ENCODE measurements at regions of chr4 and their contacts with region 1.

Region 1: DNA sequence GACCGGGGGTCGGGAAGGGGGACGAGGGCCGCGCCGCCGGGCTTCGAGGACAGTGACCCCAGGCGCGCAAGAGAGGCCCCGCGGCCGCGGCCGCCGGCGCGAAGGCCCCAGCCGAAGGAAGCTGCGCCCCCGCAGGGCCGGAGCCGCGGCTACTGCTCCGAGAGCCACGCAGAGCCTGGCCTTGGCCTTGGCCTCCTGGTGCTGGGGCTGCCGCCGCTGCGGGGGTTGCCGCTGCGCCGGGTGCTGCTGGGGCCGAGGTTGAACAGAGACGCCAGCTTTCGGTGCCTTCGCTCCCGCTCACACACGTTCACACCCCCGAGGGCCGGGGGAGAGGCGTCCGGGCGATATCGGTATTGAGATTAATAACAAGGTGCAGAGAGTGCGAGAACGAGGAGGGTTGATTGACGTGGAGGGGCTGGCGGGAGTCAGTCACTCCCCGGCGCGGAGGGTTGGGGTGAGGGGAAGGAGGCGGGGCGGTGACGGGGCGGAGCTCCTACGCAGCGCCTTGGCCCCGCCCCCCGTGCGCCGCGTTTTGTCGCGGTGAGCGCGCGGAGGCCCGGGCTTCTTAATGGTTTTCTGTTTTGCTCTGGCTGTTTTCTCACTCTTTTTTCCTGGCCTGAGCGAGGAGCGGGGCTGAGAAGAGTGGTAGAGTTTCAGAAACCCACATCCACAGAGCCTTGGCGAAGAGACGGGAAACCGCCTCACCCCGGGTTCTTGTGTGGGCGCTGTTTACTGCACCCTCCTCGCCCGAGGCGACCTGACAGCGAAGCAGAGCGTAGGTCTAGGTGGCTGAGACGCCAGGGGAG is 878 bp upstream of the CNOT6L start:
- H3K4me3 ChIP-seq: peak overlapping the region; percentile 80
- H3K27ac ChIP-seq: peak overlapping the region; percentile 92
- H3K4me1 ChIP-seq: 0 out of 2 replicates have a peak, but pooled peaks cover 3% of the 10 kb centered on the region
- CTCF ChIP-seq: no peak

Region 2: DNA sequence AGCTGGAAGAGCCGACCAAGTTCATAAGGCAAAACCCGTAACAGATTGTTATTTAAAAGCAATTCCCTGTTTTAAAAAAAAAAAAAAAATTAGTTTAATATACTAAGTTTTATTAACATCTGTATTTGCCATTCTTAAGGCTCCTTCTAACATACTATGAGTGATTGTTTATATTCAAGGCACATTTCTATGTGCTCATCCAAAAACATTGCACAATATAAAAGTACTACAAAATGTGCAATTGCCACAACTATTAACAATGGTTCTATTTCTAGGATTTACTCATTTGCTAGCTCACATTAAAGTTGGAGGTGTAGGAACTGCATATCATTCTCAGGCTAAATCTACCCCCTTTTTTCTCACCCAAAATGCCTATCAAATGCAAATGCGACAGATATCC is 46.9 kb before region 1 on chr4:
- CTCF ChIA-PET with region 1: no interaction called
- POLR2A ChIA-PET with region 1: no interaction called
- H3K4me3 ChIP-seq: no peak overlapping the region
- H3K27ac ChIP-seq: no peak overlapping the region
- H3K4me1 ChIP-seq: 0 out of 2 replicates have a peak, but pooled peaks cover 3% of the 10 kb centered on the region
- CTCF ChIP-seq: no peak

Region 3: GRCh38 chr4:77862478-77863216 is 42.6 kb after region 1 on chr4 and contains the start of gene MRPL1:
- CTCF ChIA-PET with region 1: no interaction called
- POLR2A ChIA-PET with region 1: interaction called, 14 read pairs
- H3K4me3 ChIP-seq: peak within 1 kb of the TSS; percentile 85
- H3K27ac ChIP-seq: peak within 1 kb of the TSS; percentile 70
- H3K4me1 ChIP-seq: no peaks in the 10 kb centered on the region; the same call in 1 of the 2 replicates
- CTCF ChIP-seq: no peak; the same call in 1 of the 2 replicates

Region 4: GRCh38 chr4:78136109-78137081 is 316.3 kb after region 1 on chr4:
- CTCF ChIA-PET with region 1: no interaction called
- POLR2A ChIA-PET with region 1: no interaction called
- H3K4me3 ChIP-seq: no peak overlapping the region
- H3K27ac ChIP-seq: no peak overlapping the region
- H3K4me1 ChIP-seq: 0 out of 2 replicates have a peak, but pooled peaks cover 2% of the 10 kb centered on the region
- CTCF ChIP-seq: no peak